ENCODE measurements at regions of chr5 and their contacts with region 1.

Region 1: DNA sequence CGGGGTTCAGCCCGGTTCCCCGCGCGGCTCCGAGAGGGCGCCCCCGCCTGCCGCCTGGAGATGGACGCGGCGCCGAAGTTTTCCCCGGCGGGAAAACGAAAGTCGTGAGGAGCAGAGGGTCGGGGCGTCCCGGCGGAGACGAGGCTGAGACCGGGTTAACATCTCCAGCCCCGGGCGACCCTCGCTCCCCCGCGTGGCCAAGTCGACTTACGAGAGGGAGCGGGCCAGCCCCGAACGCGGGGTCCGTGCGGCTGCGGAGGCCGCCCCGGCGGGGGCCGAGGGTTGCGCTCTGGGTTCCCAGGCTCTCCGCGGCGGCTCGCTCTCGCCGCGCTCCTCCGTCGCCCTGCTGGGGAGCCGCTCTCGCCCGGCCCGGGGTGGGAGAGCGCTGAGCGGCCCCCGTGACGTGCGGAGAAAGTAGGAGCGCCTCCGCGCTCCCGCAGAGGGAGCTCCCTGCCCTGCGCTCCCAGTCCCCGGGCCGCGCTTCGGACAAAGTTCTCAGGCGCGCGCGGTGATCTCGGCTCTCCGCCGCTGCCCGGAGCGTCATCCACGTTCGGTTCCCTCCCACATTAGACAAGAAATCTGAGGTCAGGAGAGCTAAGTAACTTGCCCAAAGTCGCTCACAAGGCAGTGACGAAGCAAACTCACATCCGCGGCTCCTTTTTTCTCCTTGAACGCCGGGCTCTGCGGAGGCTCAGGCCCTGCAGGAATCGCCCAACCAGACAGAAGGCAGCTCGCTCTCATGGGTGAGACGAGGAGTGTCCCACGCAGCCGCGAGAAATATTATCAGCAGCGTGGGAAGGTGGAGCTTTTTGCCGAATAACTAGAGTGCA is 1.2 kb upstream of the GCNT4 start:
- DNase-seq: peak; percentile 67
- H3K4me3 Mint-ChIP-seq: peak overlapping the region; percentile 87
- H3K27ac Mint-ChIP-seq: peak overlapping the region; percentile 79
- H3K4me1 Mint-ChIP-seq: peaks cover 25% of the 10 kb centered on the region
- H3K27me3 Mint-ChIP-seq: no peaks in the 10 kb centered on the region
- CTCF ChIP-seq: peak; percentile 19

Region 2: DNA sequence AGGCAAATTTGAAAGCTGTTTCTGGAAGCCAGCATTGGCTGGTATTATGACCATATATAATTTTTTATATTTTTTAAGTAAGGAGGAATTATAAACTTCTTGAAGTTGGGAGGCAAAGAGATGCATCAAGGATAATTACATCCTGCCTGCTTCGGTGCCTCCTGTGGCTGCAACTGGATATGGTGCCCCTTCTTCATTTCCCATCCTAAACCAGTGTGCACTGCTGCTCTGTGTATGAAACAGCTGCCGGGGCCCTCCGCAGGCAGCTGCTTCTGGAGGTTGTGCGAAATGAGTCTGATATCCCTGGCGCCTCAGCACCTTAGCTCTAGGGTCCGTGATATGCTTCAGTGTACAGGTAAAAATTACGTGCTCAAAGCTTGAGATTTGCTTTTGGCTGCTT is 717.2 kb before region 1 on chr5:
- CTCF ChIA-PET with region 1: no interaction called
- POLR2A ChIA-PET with region 1: no interaction called
- intact Hi-C with region 1: no loop called
- DNase-seq: no peak
- H3K4me3 Mint-ChIP-seq: no peak overlapping the region
- H3K27ac Mint-ChIP-seq: no peak overlapping the region
- H3K4me1 Mint-ChIP-seq: no peaks in the 10 kb centered on the region
- H3K27me3 Mint-ChIP-seq: no peaks in the 10 kb centered on the region
- CTCF ChIP-seq: no peak

Region 3: DNA sequence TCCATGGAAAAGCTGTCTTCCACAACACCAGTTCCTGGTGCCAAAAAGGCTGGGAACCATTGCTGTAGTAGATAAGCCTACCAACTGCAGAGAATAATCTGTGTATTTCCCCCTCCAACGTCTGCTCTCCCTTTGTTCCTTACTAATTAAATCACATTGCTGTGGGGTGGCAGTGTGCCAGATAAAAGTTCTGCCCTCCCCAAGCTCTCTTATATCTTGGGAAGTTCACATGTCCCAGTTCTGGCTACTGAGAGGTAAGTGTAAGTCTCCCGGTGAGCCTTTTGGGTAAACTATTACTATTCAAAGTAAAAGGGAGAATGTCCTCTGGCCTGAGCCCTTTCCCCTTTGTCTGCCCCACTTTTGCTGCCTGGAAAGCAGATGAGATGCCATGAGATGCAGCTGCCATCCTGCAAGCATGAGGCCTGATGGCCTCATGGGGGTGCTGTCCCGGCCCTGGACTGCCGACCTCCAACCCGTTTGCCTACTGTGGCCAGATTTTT is 427.7 kb before region 1 on chr5:
- CTCF ChIA-PET with region 1: no interaction called
- POLR2A ChIA-PET with region 1: no interaction called
- intact Hi-C with region 1: no loop called
- DNase-seq: peak; percentile 17
- H3K4me3 Mint-ChIP-seq: no peak overlapping the region
- H3K27ac Mint-ChIP-seq: peak overlapping the region; percentile 35
- H3K4me1 Mint-ChIP-seq: peaks cover 28% of the 10 kb centered on the region
- H3K27me3 Mint-ChIP-seq: no peaks in the 10 kb centered on the region
- CTCF ChIP-seq: no peak

Region 4: DNA sequence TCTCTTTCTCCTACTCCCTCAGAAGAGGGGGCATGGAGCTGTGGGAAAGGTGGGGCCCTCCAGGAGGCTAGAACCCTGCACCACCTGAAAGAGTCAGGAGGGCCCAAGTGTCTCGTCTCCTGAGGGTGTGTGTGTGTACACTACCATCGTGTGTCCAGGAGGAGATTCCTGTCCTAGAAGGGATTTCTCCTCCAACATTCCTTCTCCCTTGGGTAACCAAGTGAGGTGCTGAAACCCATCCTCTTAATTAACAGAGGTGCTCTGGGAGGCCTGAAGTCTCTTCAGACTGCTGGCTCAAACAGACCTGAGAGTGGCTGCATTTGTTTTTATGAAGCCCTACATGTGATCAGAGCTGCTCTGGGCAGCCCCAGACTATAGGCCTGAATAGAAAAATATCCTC is 126.2 kb before region 1 on chr5:
- CTCF ChIA-PET with region 1: interaction called, 19 read pairs
- POLR2A ChIA-PET with region 1: interaction called, 6 read pairs
- intact Hi-C with region 1: loop called (anchors 5 kb)
- DNase-seq: no peak
- H3K4me3 Mint-ChIP-seq: no peak overlapping the region
- H3K27ac Mint-ChIP-seq: no peak overlapping the region
- H3K4me1 Mint-ChIP-seq: no peaks in the 10 kb centered on the region
- H3K27me3 Mint-ChIP-seq: no peaks in the 10 kb centered on the region
- CTCF ChIP-seq: no peak

Region 5: DNA sequence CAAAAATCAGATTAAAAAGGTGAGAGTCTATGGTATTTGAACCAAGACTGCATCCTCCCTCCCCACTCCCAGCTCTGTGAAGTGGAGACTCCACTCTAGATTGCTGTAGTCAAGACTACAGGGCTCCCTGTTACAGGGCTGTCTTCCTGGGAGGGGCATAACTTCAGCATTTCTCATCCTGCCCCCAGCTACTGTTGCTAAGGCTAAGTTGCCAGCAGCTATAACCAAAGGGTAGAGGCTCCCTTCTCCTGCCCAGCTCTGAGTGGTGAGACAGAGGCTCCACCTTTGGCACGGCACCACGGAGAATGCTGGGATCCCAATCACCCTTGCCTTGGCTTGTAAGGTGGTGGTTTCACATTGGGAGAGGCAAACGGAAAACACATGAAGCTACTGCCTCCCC is 38.1 kb after region 1 on chr5:
- CTCF ChIA-PET with region 1: interaction called, 12 read pairs
- POLR2A ChIA-PET with region 1: interaction called, 10 read pairs
- intact Hi-C with region 1: no loop called
- DNase-seq: peak; percentile 64
- H3K4me3 Mint-ChIP-seq: no peak overlapping the region
- H3K27ac Mint-ChIP-seq: peak overlapping the region; percentile 84
- H3K4me1 Mint-ChIP-seq: peaks cover 29% of the 10 kb centered on the region
- H3K27me3 Mint-ChIP-seq: no peaks in the 10 kb centered on the region
- CTCF ChIP-seq: no peak

Region 6: GRCh38 chr5:75156585-75156984 is 103.1 kb after region 1 on chr5:
- CTCF ChIA-PET with region 1: interaction called, 7 read pairs
- POLR2A ChIA-PET with region 1: interaction called, 8 read pairs
- intact Hi-C with region 1: loop called (anchors 5 kb)
- DNase-seq: peak; percentile 21
- H3K4me3 Mint-ChIP-seq: no peak overlapping the region
- H3K27ac Mint-ChIP-seq: no peak overlapping the region
- H3K4me1 Mint-ChIP-seq: peaks cover 14% of the 10 kb centered on the region
- H3K27me3 Mint-ChIP-seq: no peaks in the 10 kb centered on the region
- CTCF ChIP-seq: no peak

Region 7: GRCh38 chr5:75265731-75266130 is 212.2 kb after region 1 on chr5:
- CTCF ChIA-PET with region 1: interaction called, 21 read pairs
- POLR2A ChIA-PET with region 1: no interaction called
- intact Hi-C with region 1: loop called (anchors 1 kb)
- DNase-seq: peak; percentile 47
- H3K4me3 Mint-ChIP-seq: no peak overlapping the region
- H3K27ac Mint-ChIP-seq: no peak overlapping the region
- H3K4me1 Mint-ChIP-seq: no peaks in the 10 kb centered on the region
- H3K27me3 Mint-ChIP-seq: no peaks in the 10 kb centered on the region
- CTCF ChIP-seq: peak; percentile 63

Region 8: DNA sequence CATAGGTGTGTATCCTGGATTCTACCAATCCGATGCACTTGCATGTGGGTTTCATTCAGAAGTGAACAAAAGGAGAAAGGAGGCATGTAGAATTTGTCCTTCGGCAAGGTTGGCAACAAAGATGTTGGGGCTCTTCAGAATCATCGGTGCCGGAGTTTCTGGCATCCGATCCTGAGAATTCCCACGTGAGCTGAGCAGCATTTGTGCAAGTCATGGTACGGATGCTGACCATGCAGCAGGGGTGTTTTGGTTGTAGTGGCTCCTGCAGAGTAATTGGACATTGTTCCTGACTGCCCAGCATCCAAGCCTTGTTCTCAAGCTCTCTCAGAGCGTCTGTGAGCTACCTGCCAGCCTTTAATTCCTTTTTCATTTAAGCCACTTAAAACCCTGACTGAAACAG is 682.8 kb after region 1 on chr5:
- CTCF ChIA-PET with region 1: no interaction called
- POLR2A ChIA-PET with region 1: no interaction called
- intact Hi-C with region 1: no loop called
- DNase-seq: no peak
- H3K4me3 Mint-ChIP-seq: no peak overlapping the region
- H3K27ac Mint-ChIP-seq: no peak overlapping the region
- H3K4me1 Mint-ChIP-seq: no peaks in the 10 kb centered on the region
- H3K27me3 Mint-ChIP-seq: peaks cover 60% of the 10 kb centered on the region
- CTCF ChIP-seq: no peak